ENCODE measurements at regions of chr11 and their contacts with region 1.

Region 1: GRCh38 chr11:69999721-70000120 is 78.4 kb upstream of the ANO1 start:
- DNase-seq: no peak
- ATAC-seq: no peak
- H3K4me3 ChIP-seq: no peak overlapping the region
- H3K27ac ChIP-seq: no peak overlapping the region
- H3K4me1 ChIP-seq: no peaks in the 10 kb centered on the region; a peak in 2 of 5 replicates
- H3K27me3 ChIP-seq: peaks cover 0 to 14% of the 10 kb centered on the region in 2 experiments; a peak in 2 of 5 replicates
- CTCF ChIP-seq: no peak
- EP300 ChIP-seq: no peak
- POLR2A ChIP-seq: no peak
- RAD21 ChIP-seq: no peak

Region 2: GRCh38 chr11:69969890-69970784 is 29.6 kb before region 1 on chr11:
- CTCF ChIA-PET with region 1: no interaction called
- POLR2A ChIA-PET with region 1: no interaction called
- in situ Hi-C with region 1: no loop called
- intact Hi-C with region 1: no loop called
- DNase-seq: peak; percentile 58 to 77 (median 76)
- ATAC-seq: peak; percentile 75
- H3K4me3 ChIP-seq: no peak overlapping the region
- H3K27ac ChIP-seq: no peak overlapping the region; the same call in 2 of the 3 replicates
- H3K4me1 ChIP-seq: peaks cover 11 to 30% of the 10 kb centered on the region in 2 experiments; a peak in 4 of 5 replicates
- H3K27me3 ChIP-seq: no peaks in the 10 kb centered on the region; a peak in 1 of 5 replicates
- CTCF ChIP-seq: no peak
- EP300 ChIP-seq: no peak
- POLR2A ChIP-seq: no peak
- RAD21 ChIP-seq: no peak

Region 3: DNA sequence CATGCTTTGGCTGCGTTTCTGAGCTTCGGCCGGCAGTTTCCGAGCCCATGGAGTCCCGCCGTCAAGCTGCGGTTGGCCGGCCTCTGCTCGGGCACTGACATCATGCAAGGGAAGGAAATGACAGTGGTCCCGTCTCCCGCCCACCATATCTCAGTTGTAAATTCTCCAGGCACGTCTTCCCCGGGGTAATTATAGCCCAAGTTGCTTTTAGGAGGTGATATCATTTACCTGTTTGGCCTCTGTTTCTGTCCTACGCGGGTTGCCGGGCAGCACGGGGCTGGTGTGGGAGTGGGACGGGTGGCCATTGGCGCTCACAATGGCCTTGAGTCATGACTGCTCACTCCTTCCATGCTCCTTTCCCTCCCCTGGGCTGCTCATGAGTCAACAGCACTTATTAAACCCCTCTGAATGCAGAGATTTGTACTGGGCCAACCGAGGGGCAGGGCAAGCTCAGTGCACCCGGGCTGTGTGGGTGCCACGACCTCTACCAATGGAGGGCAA is 74.2 kb after region 1 on chr11:
- CTCF ChIA-PET with region 1: no interaction called
- POLR2A ChIA-PET with region 1: no interaction called
- in situ Hi-C with region 1: loop called (anchors 5 kb)
- intact Hi-C with region 1: no loop called
- DNase-seq: no peak
- ATAC-seq: no peak
- H3K4me3 ChIP-seq: no peak overlapping the region
- H3K27ac ChIP-seq: no peak overlapping the region
- H3K4me1 ChIP-seq: peaks cover 0 to 10% of the 10 kb centered on the region in 2 experiments; a peak in 2 of 5 replicates
- H3K27me3 ChIP-seq: peaks cover 45 to 86% of the 10 kb centered on the region in 2 experiments
- CTCF ChIP-seq: no peak
- EP300 ChIP-seq: no peak
- POLR2A ChIP-seq: no peak
- RAD21 ChIP-seq: no peak